ENCODE measurements at regions of chr9 and their contacts with region 1.

Region 1: GRCh38 chr9:118529624-118530214 is 825.5 kb downstream of the TLR4 start:
- DNase-seq: no peak
- H3K4me3 ChIP-seq: no peak overlapping the region
- H3K4me3 Mint-ChIP-seq: no peak overlapping the region
- H3K27ac ChIP-seq: no peak overlapping the region
- H3K27ac Mint-ChIP-seq: no peak overlapping the region
- H3K4me1 ChIP-seq: no peaks in the 10 kb centered on the region
- H3K4me1 Mint-ChIP-seq: no peaks in the 10 kb centered on the region
- H3K27me3 ChIP-seq: no peaks in the 10 kb centered on the region
- H3K27me3 Mint-ChIP-seq: no peaks in the 10 kb centered on the region

Region 2: GRCh38 chr9:118183571-118183970 is 346.1 kb before region 1 on chr9:
- CTCF ChIA-PET with region 1: no interaction called
- POLR2A ChIA-PET with region 1: no interaction called
- intact Hi-C with region 1: no loop called
- DNase-seq: no peak
- H3K4me3 ChIP-seq: no peak overlapping the region
- H3K4me3 Mint-ChIP-seq: no peak overlapping the region
- H3K27ac ChIP-seq: no peak overlapping the region
- H3K27ac Mint-ChIP-seq: no peak overlapping the region
- H3K4me1 ChIP-seq: no peaks in the 10 kb centered on the region
- H3K4me1 Mint-ChIP-seq: no peaks in the 10 kb centered on the region
- H3K27me3 ChIP-seq: no peaks in the 10 kb centered on the region
- H3K27me3 Mint-ChIP-seq: no peaks in the 10 kb centered on the region

Region 3: DNA sequence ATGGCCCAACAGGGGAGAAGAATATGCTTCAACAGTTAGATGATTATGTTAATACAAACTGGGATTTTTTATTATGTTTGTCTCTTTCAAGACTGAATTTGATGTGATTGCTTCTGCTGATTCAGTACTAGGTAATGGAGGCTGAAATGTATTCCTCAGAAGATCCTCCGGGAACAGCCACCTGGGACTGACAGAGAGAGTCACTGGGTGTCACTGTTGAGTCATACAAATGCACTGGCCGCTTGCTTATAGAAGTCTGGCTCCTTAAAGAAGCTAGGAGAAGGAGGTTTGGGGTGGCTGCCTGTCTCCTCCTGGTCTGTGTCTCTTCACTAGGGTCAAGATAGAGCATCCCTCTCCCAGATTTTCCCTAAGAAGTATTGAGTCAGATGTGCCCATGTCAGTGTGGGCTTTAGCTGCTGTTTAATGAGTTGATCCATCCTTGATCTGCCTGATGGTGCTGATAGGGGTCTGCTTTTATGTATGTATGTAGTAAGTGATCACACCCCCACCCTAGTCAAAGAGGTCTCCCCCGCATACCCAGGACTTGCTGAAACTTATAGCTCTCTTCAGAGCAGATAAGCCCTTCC is 66.1 kb after region 1 on chr9:
- CTCF ChIA-PET with region 1: no interaction called
- POLR2A ChIA-PET with region 1: no interaction called
- intact Hi-C with region 1: loop called (anchors 10 kb)
- DNase-seq: no peak
- H3K4me3 ChIP-seq: no peak overlapping the region
- H3K4me3 Mint-ChIP-seq: no peak overlapping the region
- H3K27ac ChIP-seq: no peak overlapping the region
- H3K27ac Mint-ChIP-seq: no peak overlapping the region
- H3K4me1 ChIP-seq: no peaks in the 10 kb centered on the region
- H3K4me1 Mint-ChIP-seq: no peaks in the 10 kb centered on the region
- H3K27me3 ChIP-seq: no peaks in the 10 kb centered on the region
- H3K27me3 Mint-ChIP-seq: no peaks in the 10 kb centered on the region